ENCODE measurements at regions of chr2 and their contacts with region 1.

Region 1: DNA sequence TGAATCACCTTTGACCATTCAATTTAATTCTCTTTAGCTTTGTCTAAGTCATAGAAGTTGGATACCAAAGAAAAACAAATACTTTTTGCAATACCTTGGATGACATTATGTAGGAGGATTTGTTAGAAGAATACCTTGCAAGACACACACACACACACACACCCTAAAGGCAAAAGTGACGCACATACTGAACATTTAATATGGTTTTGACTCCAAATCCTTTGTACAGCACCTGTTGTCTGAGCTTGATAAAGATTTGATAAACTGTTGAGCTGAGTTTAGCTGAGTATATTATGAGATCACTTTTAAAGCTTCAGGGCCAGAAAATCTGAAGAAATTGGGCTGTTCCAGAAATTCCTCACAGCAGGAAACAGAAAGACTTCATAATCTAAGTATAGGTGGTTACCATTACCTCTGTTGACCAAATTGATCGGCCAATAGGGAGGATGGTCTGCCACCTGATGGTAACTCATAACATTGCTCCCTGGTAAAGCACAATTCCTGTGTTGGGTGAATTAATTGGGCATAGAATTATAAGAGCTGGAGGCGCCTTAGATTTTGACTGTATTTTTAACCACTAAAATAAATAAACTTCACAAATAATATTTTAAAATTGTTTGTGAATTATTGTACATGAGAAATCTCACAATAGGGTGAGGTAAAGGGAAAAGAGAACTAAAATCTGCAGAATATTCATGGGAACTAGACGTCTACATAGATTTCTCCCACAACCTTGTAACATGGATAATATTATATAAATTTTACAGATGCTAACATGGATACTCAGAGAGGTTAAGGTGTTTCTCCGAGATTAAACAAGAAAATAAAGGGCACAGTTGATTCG is 21.9 kb upstream of the RPIA start:
- DNase-seq: peak; percentile 47
- H3K4me3 Mint-ChIP-seq: no peak overlapping the region
- H3K27ac Mint-ChIP-seq: no peak overlapping the region
- H3K4me1 Mint-ChIP-seq: no peaks in the 10 kb centered on the region
- H3K27me3 Mint-ChIP-seq: no peaks in the 10 kb centered on the region

Region 2: DNA sequence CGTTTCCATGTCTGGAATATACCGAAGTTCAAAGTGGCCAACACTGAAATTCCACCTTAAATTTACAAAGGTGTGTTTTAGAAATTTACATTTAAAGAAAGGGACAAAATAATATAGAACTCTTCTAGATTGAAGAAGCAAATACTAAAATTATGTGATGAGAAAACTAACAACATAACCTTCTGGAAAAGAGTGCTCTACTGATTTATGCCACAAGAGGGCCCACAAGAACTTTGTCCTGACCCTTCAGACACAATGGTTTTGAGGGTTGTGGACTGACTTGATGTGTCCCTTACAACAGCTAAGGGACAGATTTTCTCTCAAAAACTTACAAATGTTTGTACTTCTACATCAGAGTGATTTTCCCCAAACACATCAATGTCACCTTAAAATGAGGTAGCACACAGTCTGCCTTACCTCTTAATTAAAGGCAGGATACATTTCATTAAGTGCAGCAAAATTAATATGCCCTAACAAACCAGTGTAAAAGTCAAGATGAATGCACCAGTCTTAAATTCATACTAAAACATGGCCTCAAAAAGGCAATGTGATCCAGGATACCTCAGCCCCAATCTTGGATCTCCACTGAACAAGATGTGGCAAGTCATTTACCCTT is 78.5 kb before region 1 on chr2:
- CTCF ChIA-PET with region 1: interaction called, 167 read pairs
- DNase-seq: peak; percentile 52
- H3K4me3 Mint-ChIP-seq: no peak overlapping the region
- H3K27ac Mint-ChIP-seq: peak overlapping the region; percentile 59
- H3K4me1 Mint-ChIP-seq: no peaks in the 10 kb centered on the region
- H3K27me3 Mint-ChIP-seq: no peaks in the 10 kb centered on the region

Region 3: DNA sequence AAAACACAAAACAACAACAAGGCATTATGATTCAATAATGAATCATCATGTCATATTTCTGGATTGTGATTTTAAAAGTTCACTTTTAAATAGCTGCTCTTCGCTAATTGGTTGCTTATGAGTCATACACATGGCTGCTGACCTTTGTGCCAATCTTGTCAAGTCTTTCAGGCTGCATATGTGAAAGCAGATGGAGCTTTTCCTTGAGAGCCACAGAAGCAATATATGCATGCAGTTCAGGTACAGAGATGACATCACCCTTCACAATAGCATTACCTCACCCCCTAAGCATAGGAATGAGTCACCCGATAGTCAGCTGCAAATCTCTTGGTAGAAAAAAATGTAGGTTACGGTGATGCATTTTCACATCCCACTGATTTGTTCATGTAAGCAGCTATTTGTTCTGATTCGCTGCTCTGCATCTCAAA is 69.5 kb before region 1 on chr2:
- CTCF ChIA-PET with region 1: interaction called, 167 read pairs
- DNase-seq: peak; percentile 28
- H3K4me3 Mint-ChIP-seq: no peak overlapping the region
- H3K27ac Mint-ChIP-seq: no peak overlapping the region
- H3K4me1 Mint-ChIP-seq: peaks cover 14% of the 10 kb centered on the region
- H3K27me3 Mint-ChIP-seq: no peaks in the 10 kb centered on the region

Region 4: DNA sequence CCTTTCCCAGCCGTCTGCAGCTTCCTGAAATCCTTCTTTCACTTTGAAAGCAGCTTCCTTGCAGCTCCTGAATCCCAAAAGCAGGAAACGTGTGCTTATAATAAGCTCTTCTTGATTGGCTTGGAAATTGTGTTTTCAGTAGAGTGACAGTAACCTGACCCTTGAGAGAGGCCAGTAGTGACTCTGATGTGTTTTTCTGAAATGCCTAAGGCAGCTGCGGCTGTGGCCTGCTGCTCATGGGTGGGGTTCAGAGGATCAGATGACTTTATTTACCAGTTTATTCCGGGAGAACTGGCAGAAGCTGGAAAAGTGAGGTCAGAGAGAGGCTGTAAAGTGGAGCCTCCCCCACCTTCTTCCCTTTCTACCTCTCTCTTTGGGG is 10.1 kb before region 1 on chr2:
- CTCF ChIA-PET with region 1: interaction called, 23 read pairs
- DNase-seq: no peak
- H3K4me3 Mint-ChIP-seq: no peak overlapping the region
- H3K27ac Mint-ChIP-seq: no peak overlapping the region
- H3K4me1 Mint-ChIP-seq: no peaks in the 10 kb centered on the region
- H3K27me3 Mint-ChIP-seq: no peaks in the 10 kb centered on the region

Region 5: GRCh38 chr2:88753833-88754584 is 84.4 kb after region 1 on chr2:
- CTCF ChIA-PET with region 1: no interaction called
- DNase-seq: peak; percentile 60
- H3K4me3 Mint-ChIP-seq: no peak overlapping the region
- H3K27ac Mint-ChIP-seq: peak overlapping the region; percentile 91
- H3K4me1 Mint-ChIP-seq: peaks cover 50% of the 10 kb centered on the region
- H3K27me3 Mint-ChIP-seq: no peaks in the 10 kb centered on the region

Region 6: DNA sequence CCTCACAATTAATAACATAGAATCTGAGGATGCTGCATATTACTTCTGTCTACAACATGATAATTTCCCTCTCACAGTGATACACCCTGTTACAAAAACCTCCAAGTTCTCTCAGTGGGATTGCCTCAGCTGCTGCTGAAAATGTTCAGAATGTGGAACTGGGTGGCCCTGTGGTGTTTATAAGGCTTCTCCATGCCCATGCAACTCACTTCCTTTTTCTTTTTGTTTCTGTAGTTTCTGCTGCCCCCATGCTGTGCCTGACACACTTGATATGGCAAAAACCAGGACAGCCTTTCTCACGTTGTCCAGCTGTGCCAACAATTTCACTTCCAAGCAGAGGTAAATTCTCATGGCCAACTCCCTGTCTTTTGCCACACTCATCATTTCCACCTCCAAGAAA is 228.1 kb after region 1 on chr2:
- CTCF ChIA-PET with region 1: no interaction called
- DNase-seq: no peak
- H3K4me3 Mint-ChIP-seq: no peak overlapping the region
- H3K27ac Mint-ChIP-seq: no peak overlapping the region
- H3K4me1 Mint-ChIP-seq: no peaks in the 10 kb centered on the region
- H3K27me3 Mint-ChIP-seq: peaks cover 8% of the 10 kb centered on the region